Activated T-helper 2 cell treated with anti-CD3 and anti-CD28 coated beads, Interferon-gamma antibody, Interleukin-2, Interleukin-4, amounts not matched to agents 10 μg/mL and 5 μg/mL and 100 μg/mL, durations not matched to agents 14 hours and 24 hours and 36 hours (primary cell): ENCODE measurements at regions of chr5 and their contacts with region 1.

Region 1: GRCh38 chr5:142472300-142472951 is 147.6 kb upstream of the SPRY4 start:
- DNase-seq: peak; percentile 11
- H3K4me3 Mint-ChIP-seq: no peak overlapping the region
- H3K27ac Mint-ChIP-seq: peak overlapping the region; percentile 53
- H3K4me1 Mint-ChIP-seq: peaks cover 13% of the 10 kb centered on the region
- H3K27me3 Mint-ChIP-seq: peaks cover 2% of the 10 kb centered on the region

Region 2: GRCh38 chr5:142356716-142357473 is 115.5 kb before region 1 on chr5:
- intact Hi-C with region 1: loop called (anchors 2 kb)
- DNase-seq: peak; percentile 87
- H3K4me3 Mint-ChIP-seq: peak overlapping the region; percentile 73
- H3K27ac Mint-ChIP-seq: peak overlapping the region; percentile 90
- H3K4me1 Mint-ChIP-seq: peaks cover 34% of the 10 kb centered on the region
- H3K27me3 Mint-ChIP-seq: peaks cover 9% of the 10 kb centered on the region